GM13976 (cell line): ENCODE measurements at regions of chr1 and their contacts with region 1.

Region 1: DNA sequence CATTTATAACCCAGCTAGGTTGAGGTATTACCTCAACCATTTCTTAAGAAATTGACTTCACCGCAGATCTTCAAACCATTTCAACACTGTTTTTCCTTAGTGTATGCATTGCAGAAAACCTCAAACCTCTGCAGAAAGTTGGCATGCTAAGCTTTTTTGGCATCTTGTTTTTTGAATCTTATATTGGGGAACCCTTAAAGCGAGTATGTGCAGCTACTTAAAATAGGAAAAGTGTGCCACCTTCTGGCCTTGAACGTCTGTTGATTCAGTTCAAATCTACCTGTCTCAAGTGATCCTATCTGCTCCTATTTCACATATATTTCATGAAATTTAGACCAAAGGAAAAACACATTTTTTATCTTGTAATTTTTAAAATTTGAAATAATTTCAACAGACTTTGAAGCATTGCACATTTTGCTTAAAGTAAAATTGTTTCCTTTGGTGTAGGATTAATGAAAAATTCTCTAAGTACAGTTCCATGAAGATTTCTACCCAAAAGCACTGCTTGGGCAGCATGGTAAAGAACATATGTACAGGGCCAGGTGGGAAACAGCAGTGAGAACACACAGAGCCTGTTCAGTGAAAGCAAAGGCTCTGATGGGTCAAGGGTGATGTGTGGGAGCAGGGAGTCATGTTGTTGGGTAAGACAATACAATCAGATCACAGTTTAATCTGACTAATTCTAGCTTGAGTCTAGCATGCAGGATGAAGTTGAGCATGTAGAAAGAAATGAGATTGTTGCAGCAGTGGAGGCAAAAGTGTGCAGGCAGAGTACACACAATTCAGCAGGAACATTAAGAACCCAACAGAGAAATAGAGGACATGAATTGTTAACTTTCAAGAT is 17.2 kb downstream of the HENMT1 start:
- DNase-seq: peak; percentile 69
- CTCF ChIP-seq: peak; percentile 44

Region 2: GRCh38 chr1:107782217-107782845 is 861.4 kb before region 1 on chr1:
- in situ Hi-C with region 1: no loop called
- DNase-seq: no peak
- CTCF ChIP-seq: peak; percentile 44

Region 3: DNA sequence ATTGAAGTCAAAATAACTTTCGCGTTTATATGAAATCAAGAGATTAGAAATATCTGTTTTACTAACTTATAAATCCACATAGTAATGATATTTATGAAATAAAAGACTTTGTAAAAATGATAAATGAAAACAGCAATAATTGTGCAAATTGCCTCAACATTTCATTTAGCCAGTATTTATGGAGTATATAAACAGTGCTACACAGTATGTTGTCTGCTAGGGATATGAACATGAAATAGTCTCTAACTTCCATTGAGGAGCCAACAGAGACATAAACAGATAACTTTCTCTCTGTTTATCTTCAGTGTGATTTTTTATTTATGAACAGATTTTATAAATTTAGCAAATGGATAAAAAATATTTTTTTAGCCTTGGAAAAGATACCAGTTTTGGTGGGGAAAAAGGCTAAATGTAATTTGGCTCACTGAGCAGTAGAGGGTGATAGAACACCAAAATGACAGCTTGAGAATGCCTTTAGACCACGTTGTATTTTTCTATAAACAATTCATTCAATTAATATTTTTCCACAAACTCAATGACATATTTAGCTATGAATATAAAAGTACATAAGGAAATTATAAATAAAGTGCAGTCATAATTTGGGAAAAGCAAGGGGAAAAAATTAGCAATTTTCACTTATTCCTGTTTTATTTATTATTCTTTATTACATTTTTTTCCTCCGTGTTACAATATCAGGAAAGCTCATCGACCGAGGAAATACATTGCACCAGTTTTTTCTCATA is 131.3 kb before region 1 on chr1:
- in situ Hi-C with region 1: loop called (anchors 10 kb)
- DNase-seq: peak; percentile 28
- CTCF ChIP-seq: peak; percentile 53

Region 4: DNA sequence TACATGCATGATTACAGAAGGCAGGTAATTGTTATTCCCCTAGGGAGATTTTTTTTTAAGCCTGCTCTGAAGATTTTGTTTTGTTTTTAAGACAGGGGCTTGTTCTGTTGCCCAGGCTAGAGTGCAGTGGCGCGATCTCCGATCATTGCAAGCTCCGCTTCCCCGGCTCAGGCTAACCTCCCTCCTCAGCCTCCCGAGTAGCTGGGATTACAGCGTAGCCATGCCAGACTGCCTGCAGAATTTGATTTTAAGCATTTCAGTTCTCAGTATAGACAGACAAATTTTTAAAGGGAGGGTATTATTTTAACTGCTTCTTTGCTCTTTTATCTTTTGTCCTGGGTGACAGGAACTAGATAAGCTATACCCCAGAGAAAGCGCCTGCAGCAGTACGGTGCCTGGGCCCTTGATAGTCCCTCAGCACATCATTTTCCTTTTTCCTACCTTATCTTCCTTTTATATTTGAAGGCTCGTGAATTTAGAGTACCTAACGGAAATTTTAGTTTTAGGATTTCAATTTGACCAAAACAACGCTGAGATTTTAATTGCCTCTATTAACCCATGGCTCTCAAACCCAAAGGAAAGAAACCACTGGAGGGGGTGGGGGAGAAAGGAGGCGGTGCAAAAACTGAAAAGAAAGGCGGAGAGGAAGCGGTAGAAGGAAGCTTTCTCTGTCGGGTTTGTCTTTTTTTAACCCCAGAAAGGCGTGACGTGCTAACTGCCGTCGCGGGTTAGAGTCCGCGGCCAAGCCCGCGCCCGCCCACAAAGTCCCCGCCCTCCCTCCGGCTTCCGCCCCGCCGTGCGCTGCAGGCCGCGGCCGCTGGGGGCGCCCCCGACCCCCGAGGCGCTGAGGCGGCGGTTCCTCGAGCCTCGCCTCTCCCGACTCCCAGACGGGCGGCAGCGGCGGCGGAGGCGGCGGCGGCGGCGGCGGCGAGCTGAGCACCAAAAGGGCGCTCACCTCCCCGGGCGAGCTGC is 84.2 kb before region 1 on chr1 and contains the start of gene EEIG2:
- in situ Hi-C with region 1: no loop called
- DNase-seq: peak; percentile 91
- CTCF ChIP-seq: peak; percentile 94